ENCODE measurements at regions of chr2 and their contacts with region 1.

Region 1: DNA sequence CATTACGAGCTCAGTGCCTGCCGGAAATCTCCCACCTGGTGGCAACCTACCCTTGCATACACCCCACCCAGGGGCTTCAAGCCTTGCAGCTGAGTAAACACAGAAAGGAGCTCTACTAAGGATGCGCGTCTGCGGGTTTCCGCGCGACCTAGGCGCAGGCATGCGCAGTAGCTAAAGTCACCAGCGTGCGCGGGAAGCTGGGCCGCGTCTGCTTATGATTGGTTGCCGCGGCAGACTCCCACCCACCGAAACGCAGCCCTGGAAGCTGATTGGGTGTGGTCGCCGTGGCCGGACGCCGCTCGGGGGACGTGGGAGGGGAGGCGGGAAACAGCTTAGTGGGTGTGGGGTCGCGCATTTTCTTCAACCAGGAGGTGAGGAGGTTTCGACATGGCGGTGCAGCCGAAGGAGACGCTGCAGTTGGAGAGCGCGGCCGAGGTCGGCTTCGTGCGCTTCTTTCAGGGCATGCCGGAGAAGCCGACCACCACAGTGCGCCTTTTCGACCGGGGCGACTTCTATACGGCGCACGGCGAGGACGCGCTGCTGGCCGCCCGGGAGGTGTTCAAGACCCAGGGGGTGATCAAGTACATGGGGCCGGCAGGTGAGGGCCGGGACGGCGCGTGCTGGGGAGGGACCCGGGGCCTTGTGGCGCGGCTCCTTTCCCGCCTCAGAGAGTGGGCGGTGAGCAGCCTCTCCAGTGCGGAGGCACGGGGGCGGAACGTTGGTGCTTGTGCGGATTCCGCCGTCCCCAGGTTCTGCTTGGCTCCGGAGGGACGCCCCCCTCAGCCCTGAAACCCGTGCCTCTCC is at the start of gene MSH2:
- DNase-seq: peak; percentile 77 to 95 (median 87)
- ATAC-seq: peak; percentile 94 to 97 (median 94)
- H3K4me3 ChIP-seq: peak within 1 kb of the TSS; percentile 78 to 99
- H3K4me3 Mint-ChIP-seq: peak within 1 kb of the TSS; percentile 97 to 99 (median 98)
- H3K27ac ChIP-seq: peak within 1 kb of the TSS; percentile 62
- H3K27ac Mint-ChIP-seq: peak within 1 kb of the TSS; percentile 92 to 93
- H3K4me1 ChIP-seq: peaks cover 12 to 29% of the 10 kb centered on the region in 2 experiments
- H3K4me1 Mint-ChIP-seq: peaks cover 41 to 49% (median 45%) of the 10 kb centered on the region in 3 donors
- H3K27me3 ChIP-seq: no peaks in the 10 kb centered on the region
- H3K27me3 Mint-ChIP-seq: no peaks in the 10 kb centered on the region
- total RNA-seq, gene MSH2: 16.6 to 29.1 (median 23.2) TPM

Region 2: DNA sequence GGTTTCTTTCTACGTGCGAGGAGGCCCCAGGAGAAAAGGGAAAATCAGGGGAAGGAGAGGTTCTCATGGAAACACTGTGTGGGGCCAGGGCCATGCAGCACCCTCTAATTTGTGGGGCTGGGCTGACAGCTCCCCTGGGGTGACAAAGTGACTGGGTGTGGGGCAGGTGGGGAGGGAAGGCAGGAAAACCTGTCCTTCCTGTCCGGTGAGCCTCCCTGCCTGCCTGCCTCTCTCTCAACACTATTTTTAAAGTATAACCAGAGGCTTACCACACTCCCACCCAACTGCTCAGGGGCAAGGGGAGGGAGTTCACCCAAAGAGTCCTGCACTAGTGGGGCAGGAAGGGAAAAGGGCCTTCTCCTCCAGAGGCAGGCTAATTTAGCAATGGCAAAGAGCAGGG is 1116.3 kb before region 1 on chr2:
- CTCF ChIA-PET with region 1: no interaction called
- POLR2A ChIA-PET with region 1: interaction called in 1 of 2 experiments, 10 read pairs
- DNase-seq: no peak
- ATAC-seq: no peak
- H3K4me3 ChIP-seq: no peak overlapping the region
- H3K4me3 Mint-ChIP-seq: no peak overlapping the region
- H3K27ac ChIP-seq: no peak overlapping the region
- H3K27ac Mint-ChIP-seq: no peak overlapping the region
- H3K4me1 ChIP-seq: no peaks in the 10 kb centered on the region
- H3K4me1 Mint-ChIP-seq: no peaks in the 10 kb centered on the region
- H3K27me3 ChIP-seq: peaks cover 0 to 6% of the 10 kb centered on the region in 2 experiments
- H3K27me3 Mint-ChIP-seq: peaks cover 0 to 4% of the 10 kb centered on the region in 2 donors

Region 3: GRCh38 chr2:47127862-47128543 is 275.0 kb before region 1 on chr2:
- CTCF ChIA-PET with region 1: no interaction called
- POLR2A ChIA-PET with region 1: no interaction called
- DNase-seq: no peak
- ATAC-seq: no peak
- H3K4me3 ChIP-seq: no peak overlapping the region
- H3K4me3 Mint-ChIP-seq: no peak overlapping the region
- H3K27ac ChIP-seq: no peak overlapping the region
- H3K27ac Mint-ChIP-seq: peak overlapping the region in 1 of 2 donors; percentile 16
- H3K4me1 ChIP-seq: no peaks in the 10 kb centered on the region
- H3K4me1 Mint-ChIP-seq: no peaks in the 10 kb centered on the region
- H3K27me3 ChIP-seq: peaks cover 0 to 2% of the 10 kb centered on the region in 2 experiments
- H3K27me3 Mint-ChIP-seq: peaks cover 0 to 5% of the 10 kb centered on the region in 2 donors

Region 4: GRCh38 chr2:47313141-47313691 is 89.8 kb before region 1 on chr2:
- CTCF ChIA-PET with region 1: no interaction called
- POLR2A ChIA-PET with region 1: no interaction called
- DNase-seq: no peak
- ATAC-seq: no peak
- H3K4me3 ChIP-seq: no peak overlapping the region
- H3K4me3 Mint-ChIP-seq: no peak overlapping the region
- H3K27ac ChIP-seq: no peak overlapping the region
- H3K27ac Mint-ChIP-seq: no peak overlapping the region
- H3K4me1 ChIP-seq: no peaks in the 10 kb centered on the region
- H3K4me1 Mint-ChIP-seq: peaks cover 0 to 10% (median 0%) of the 10 kb centered on the region in 3 donors
- H3K27me3 ChIP-seq: peaks cover 0 to 6% of the 10 kb centered on the region in 2 experiments
- H3K27me3 Mint-ChIP-seq: peaks cover 0 to 4% of the 10 kb centered on the region in 2 donors

Region 5: DNA sequence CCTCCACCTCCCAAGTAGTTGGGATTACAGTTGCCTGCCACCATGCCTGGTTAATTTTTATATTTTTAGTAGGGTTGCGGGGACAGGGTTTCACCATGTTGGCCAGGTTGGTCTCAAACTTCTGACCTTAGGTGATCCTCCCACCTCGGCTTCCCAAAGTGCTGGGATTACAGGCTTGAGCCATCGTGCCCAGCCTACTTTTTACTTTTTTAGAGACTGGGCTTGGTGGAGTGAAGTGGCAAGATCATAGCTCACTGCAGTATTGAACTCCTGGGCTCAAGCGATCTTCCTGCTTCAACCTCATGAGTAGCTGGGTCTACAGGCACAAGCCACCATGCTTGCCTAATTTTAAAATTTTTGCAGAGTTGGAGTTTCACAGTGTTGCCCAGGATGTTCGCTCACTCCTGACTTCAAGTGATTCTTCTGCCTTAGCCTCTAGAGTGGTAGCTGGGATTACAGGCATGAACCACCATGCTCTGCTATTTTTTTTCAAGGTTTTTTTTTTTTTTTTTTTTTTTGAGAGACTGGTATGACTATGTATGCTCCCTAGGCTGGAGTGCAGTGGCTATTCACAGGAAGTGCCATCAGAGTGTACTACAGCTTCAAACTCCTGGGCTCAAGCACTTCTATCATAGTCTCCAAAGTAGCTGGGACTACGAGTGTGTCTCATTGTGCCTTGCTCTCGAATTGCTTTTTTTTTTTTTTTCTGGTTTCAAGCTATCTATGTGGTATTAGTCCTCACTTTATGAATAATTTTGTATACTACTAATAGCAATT is 11.9 kb after region 1 on chr2:
- CTCF ChIA-PET with region 1: no interaction called
- POLR2A ChIA-PET with region 1: interaction called, 4 to 15 read pairs
- DNase-seq: no peak
- ATAC-seq: no peak
- H3K4me3 ChIP-seq: no peak overlapping the region
- H3K4me3 Mint-ChIP-seq: no peak overlapping the region
- H3K27ac ChIP-seq: no peak overlapping the region
- H3K27ac Mint-ChIP-seq: no peak overlapping the region
- H3K4me1 ChIP-seq: no peaks in the 10 kb centered on the region
- H3K4me1 Mint-ChIP-seq: peaks cover 0 to 2% (median 0%) of the 10 kb centered on the region in 3 donors
- H3K27me3 ChIP-seq: no peaks in the 10 kb centered on the region
- H3K27me3 Mint-ChIP-seq: no peaks in the 10 kb centered on the region

Region 6: DNA sequence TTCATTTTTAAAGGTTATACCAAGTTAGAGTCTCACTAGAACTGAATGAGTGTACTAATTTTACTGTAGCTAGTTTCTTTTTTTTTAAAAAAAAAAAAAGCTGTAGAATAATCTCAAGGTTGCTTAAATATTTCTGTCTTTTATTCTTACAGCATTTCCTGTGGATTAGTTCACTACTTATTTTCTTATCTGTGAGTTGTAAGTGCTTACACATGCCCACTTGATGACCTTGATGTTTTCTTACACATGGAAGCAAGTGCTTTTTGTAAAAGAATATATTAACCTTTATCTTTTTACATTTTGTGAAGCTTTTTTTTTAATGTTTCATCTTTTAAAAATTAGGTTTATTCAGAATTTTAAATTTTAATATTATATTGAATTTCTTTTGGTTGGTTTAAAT is 57.8 kb after region 1 on chr2:
- CTCF ChIA-PET with region 1: no interaction called
- POLR2A ChIA-PET with region 1: interaction called in 1 of 2 experiments, 12 read pairs
- DNase-seq: no peak
- ATAC-seq: no peak
- H3K4me3 ChIP-seq: no peak overlapping the region
- H3K4me3 Mint-ChIP-seq: no peak overlapping the region
- H3K27ac ChIP-seq: no peak overlapping the region
- H3K27ac Mint-ChIP-seq: no peak overlapping the region
- H3K4me1 ChIP-seq: peaks cover 0 to 2% of the 10 kb centered on the region in 2 experiments
- H3K4me1 Mint-ChIP-seq: peaks cover 15 to 19% (median 17%) of the 10 kb centered on the region in 3 donors
- H3K27me3 ChIP-seq: no peaks in the 10 kb centered on the region
- H3K27me3 Mint-ChIP-seq: no peaks in the 10 kb centered on the region

Region 7: DNA sequence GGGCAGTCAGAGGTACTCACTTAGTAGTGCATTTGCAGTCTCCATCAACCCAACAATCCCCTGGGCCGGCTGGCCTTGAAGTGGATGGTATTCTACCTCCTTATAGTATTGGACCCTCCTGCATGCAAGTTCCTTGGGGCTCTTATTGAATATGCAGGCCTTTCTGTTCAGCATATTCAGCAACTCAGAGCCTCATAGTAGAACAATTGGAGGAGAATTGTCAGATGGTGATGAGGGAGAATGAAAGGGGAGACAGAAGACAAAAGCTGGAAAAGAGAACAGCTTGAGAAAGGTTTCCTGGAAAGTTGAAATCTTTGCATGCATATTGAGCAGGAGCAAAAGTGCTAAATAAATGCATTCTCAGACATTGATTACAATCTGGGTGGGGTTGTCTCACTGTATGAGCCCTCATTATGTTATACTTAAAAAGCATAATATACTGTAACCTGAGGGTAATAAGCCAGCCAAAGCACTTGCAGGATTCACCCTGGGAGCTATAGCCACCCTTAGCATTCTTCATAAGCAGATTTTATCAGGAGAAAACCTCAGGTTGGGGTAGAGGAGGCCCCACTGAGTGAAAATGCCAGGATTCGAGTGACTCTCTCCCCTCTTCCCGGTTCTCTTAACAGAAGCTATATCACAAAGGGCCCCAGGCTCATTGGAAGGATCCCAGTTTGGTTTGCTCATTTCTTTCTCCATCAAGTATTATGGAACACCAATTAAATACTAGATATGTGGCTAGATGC is 178.0 kb after region 1 on chr2:
- CTCF ChIA-PET with region 1: no interaction called
- POLR2A ChIA-PET with region 1: no interaction called
- DNase-seq: no peak
- ATAC-seq: no peak
- H3K4me3 ChIP-seq: no peak overlapping the region
- H3K4me3 Mint-ChIP-seq: no peak overlapping the region
- H3K27ac ChIP-seq: no peak overlapping the region
- H3K27ac Mint-ChIP-seq: no peak overlapping the region
- H3K4me1 ChIP-seq: no peaks in the 10 kb centered on the region
- H3K4me1 Mint-ChIP-seq: no peaks in the 10 kb centered on the region
- H3K27me3 ChIP-seq: no peaks in the 10 kb centered on the region
- H3K27me3 Mint-ChIP-seq: peaks cover 6 to 13% of the 10 kb centered on the region in 2 donors